ENCODE measurements at regions of chr17 and their contacts with region 1.

Region 1: DNA sequence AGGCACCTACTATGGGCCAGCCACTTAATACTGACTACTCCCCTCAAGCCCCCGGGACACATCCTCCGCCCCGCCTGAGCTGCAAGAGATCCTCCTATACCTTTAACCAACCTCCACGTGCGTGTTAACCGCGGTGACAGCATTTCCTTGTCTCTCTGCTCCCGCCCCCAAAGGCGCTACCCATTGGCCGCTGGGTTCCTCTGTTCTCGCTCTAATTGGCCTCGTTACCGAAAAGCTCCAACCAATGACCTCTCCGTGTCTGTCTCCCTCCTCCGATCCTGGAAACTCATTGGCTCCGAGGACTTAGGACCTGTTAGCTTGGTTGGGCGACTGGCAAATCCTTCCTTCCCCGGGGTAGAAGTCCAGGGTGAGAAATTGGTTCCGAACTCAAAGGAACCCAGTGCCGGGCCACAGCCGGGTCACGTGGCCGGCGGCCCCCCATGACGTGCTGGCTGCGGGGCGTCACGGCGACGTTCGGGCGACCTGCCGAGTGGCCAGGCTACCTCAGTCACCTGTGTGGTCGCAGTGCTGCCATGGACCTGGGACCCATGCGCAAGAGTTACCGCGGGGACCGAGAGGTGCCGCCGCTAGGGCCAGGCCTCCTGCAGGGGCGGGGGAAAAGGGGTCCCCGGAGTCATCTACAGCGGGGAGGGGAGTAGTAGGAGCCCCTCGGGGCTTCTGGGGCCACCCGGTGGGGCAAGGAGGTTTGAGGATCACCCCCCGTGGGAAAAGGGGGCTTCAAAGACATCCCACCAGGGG is at the start of gene PNPO:
- DNase-seq: peak; percentile 92 to 95
- ATAC-seq: peak; percentile 98 to 99 (median 98)
- H3K4me3 ChIP-seq: peak within 1 kb of the TSS; percentile 99
- H3K27ac ChIP-seq: peak within 1 kb of the TSS; percentile 94
- H3K4me1 ChIP-seq: peaks cover 16% of the 10 kb centered on the region
- H3K27me3 ChIP-seq: no peaks in the 10 kb centered on the region
- CTCF ChIP-seq: no peak
- total RNA-seq, gene PNPO: 28.2 to 42.3 (median 33.8) TPM

Region 2: GRCh38 chr17:47882247-47882646 is 59.2 kb before region 1 on chr17:
- intact Hi-C with region 1: no loop called
- DNase-seq: no peak
- ATAC-seq: peak in 1 of 4 donors; percentile 27
- H3K4me3 ChIP-seq: peak overlapping the region; percentile 15
- H3K27ac ChIP-seq: no peak overlapping the region
- H3K4me1 ChIP-seq: no peaks in the 10 kb centered on the region
- H3K27me3 ChIP-seq: peaks cover 0 to 16% (median 0%) of the 10 kb centered on the region in 3 donors
- CTCF ChIP-seq: no peak

Region 3: DNA sequence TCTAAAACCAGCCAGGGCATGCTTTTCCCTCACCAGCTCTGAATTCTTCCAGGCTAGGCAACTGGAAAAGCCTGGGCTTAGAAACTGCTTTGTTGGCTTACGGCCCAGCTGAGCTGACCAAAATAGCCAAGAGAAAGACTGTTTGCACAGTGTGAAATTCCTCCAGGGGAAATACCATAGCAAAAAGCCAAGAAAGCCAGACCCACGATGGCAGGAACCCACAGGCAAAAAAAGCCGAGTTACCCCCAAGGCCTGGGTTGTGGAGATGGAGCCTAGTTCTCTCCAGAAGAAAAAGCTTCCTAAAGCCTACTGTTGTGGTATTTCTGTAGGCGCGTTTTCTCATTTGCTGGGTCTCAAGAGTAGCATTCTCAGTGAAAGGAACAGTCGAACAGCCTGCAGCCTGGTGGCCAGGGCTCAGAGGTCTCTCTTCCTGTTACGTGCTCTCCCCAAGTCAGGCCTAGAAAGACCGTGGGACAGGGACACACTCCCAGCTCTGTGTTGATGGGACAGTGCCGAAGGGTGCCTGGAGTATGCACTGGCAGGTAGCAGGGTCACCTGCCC is 36.1 kb before region 1 on chr17:
- intact Hi-C with region 1: loop called (anchors 2 to 5 kb)
- DNase-seq: peak; percentile 72 to 88
- ATAC-seq: peak; percentile 52 to 71 (median 64)
- H3K4me3 ChIP-seq: peak overlapping the region; percentile 45
- H3K27ac ChIP-seq: peak overlapping the region; percentile 88
- H3K4me1 ChIP-seq: peaks cover 82% of the 10 kb centered on the region
- H3K27me3 ChIP-seq: no peaks in the 10 kb centered on the region
- CTCF ChIP-seq: no peak

Measured in psoas muscle (tissue), 8 donors.